Panc1 (cell line): ENCODE measurements at regions of chr12 and their contacts with region 1.

Region 1: GRCh38 chr12:109770104-109770860 is 56.7 kb downstream of the FAM222A start:
- DNase-seq: no peak
- ATAC-seq: no peak
- H3K4me3 ChIP-seq: no peak overlapping the region
- H3K27ac ChIP-seq: no peak overlapping the region
- H3K4me1 ChIP-seq: peaks cover 8% of the 10 kb centered on the region
- H3K27me3 ChIP-seq: no peaks in the 10 kb centered on the region
- CTCF ChIP-seq: no peak

Region 2: GRCh38 chr12:109304485-109304884 is 465.8 kb before region 1 on chr12:
- CTCF ChIA-PET with region 1: no interaction called
- POLR2A ChIA-PET with region 1: interaction called, 12 read pairs
- in situ Hi-C with region 1: no loop called
- intact Hi-C with region 1: no loop called
- DNase-seq: no peak
- ATAC-seq: no peak
- H3K4me3 ChIP-seq: no peak overlapping the region
- H3K27ac ChIP-seq: no peak overlapping the region
- H3K4me1 ChIP-seq: 0 out of 2 replicates have a peak, but pooled peaks cover 3% of the 10 kb centered on the region
- H3K27me3 ChIP-seq: peaks cover 23% of the 10 kb centered on the region
- CTCF ChIP-seq: no peak

Region 3: DNA sequence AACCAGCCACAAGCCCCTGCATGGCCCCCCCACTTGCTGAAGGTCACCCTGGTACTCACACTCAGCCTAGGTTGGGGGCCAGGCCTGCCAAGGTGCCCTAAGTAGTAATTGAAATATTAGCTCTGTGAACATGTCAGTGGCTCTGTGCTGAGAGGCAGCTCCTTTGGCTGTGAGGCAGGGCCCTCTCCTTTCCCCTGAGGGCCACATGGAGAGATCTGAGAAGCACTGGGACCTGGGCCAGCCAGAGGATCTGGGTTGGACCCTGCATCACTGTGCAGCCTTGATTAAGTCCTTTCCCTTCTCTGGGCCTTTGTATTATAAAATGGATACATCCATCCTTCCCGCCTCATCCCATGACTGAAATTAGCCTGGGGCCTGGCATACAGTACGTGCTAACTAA is 114.7 kb before region 1 on chr12:
- CTCF ChIA-PET with region 1: interaction called, 11 read pairs
- POLR2A ChIA-PET with region 1: no interaction called
- in situ Hi-C with region 1: no loop called
- intact Hi-C with region 1: no loop called
- DNase-seq: no peak
- ATAC-seq: no peak
- H3K4me3 ChIP-seq: no peak overlapping the region
- H3K27ac ChIP-seq: no peak overlapping the region
- H3K4me1 ChIP-seq: no peaks in the 10 kb centered on the region
- H3K27me3 ChIP-seq: no peaks in the 10 kb centered on the region; the same call in 1 of the 2 replicates
- CTCF ChIP-seq: no peak

Region 4: GRCh38 chr12:109736552-109737108 is 33.7 kb before region 1 on chr12:
- CTCF ChIA-PET with region 1: no interaction called
- POLR2A ChIA-PET with region 1: no interaction called
- in situ Hi-C with region 1: no loop called
- intact Hi-C with region 1: no loop called
- DNase-seq: no peak
- ATAC-seq: no peak
- H3K4me3 ChIP-seq: no peak overlapping the region
- H3K27ac ChIP-seq: no peak overlapping the region
- H3K4me1 ChIP-seq: no peaks in the 10 kb centered on the region
- H3K27me3 ChIP-seq: no peaks in the 10 kb centered on the region
- CTCF ChIP-seq: no peak